ENCODE measurements at regions of chr2 and their contacts with region 1.

Region 1: GRCh38 chr2:183078465-183079138 is at the start of gene DUSP19:
- DNase-seq: peak; percentile 87
- ATAC-seq: peak; percentile 86
- H3K4me3 ChIP-seq: peak within 1 kb of the TSS; percentile 60 to 98 (median 89)
- H3K4me3 Mint-ChIP-seq: peak within 1 kb of the TSS; percentile 99
- H3K27ac ChIP-seq: peak within 1 kb of the TSS in 1 of 2 donors; percentile 41
- H3K27ac Mint-ChIP-seq: peak within 1 kb of the TSS; percentile 83
- H3K4me1 ChIP-seq: peaks cover 3 to 6% of the 10 kb centered on the region in 2 donors
- H3K4me1 Mint-ChIP-seq: peaks cover 11% of the 10 kb centered on the region
- H3K27me3 ChIP-seq: peaks cover 0 to 9% (median 3%) of the 10 kb centered on the region in 4 experiments
- H3K27me3 Mint-ChIP-seq: no peaks in the 10 kb centered on the region
- CTCF ChIP-seq: no peak
- total RNA-seq, gene DUSP19: 1.7 and 2.0 TPM in 2 replicates

Region 2: GRCh38 chr2:183038341-183039300 is 40.0 kb before region 1 on chr2 and contains the start of gene NCKAP1:
- CTCF ChIA-PET with region 1: no interaction called
- POLR2A ChIA-PET with region 1: no interaction called
- intact Hi-C with region 1: loop called (anchors 2 kb)
- DNase-seq: peak; percentile 65
- ATAC-seq: peak; percentile 70
- H3K4me3 ChIP-seq: peak within 1 kb of the TSS in 3 of 5 experiments; percentile 32 to 43 (median 35)
- H3K4me3 Mint-ChIP-seq: peak within 1 kb of the TSS; percentile 74
- H3K27ac ChIP-seq: no peak within 1 kb of the TSS
- H3K27ac Mint-ChIP-seq: peak within 1 kb of the TSS; percentile 41
- H3K4me1 ChIP-seq: peaks cover 22 to 41% of the 10 kb centered on the region in 2 donors
- H3K4me1 Mint-ChIP-seq: peaks cover 27% of the 10 kb centered on the region
- H3K27me3 ChIP-seq: peaks cover 6 to 58% (median 51%) of the 10 kb centered on the region in 4 experiments
- H3K27me3 Mint-ChIP-seq: peaks cover 50% of the 10 kb centered on the region
- CTCF ChIP-seq: peak; percentile 70
- total RNA-seq, gene NCKAP1: 0.05 TPM in 1 of 2 replicates, not detected in the other

Region 3: DNA sequence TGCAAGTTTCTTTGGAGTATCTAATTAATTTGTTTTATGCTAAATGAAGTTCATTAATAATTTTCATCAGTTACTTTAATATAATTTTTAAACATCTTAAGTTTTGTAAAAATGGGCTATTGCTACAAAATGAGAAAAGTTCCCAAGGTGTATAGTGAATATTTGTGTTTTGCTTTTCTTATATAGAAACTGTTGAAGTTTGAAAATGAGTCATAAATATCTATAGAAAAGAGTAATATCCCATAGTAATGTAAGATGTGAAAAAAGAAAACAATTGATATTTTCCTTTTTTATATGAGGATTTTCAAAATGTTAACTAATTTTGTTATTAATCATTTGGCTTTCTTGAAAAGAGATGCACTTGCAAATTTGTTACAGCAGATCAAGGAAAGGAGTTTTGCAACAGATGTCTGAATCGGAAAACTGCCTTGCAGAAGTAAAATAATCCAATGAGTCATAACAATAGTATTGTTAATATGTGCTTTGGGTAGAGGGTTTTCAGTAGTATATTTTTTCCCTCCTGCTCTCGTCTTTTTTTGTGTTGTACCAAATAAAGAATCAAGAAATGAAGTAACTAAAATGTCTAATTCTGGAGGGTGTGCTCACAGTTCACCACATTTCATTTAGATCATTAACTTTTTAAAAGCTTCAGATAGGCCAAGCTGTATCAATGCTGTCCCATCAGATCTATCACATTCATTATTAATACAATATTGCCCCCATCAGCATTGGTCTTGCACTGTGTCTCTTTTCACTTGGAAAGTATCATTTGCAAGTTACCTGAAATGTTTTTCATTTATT is 15.5 kb after region 1 on chr2:
- CTCF ChIA-PET with region 1: no interaction called
- POLR2A ChIA-PET with region 1: no interaction called
- intact Hi-C with region 1: no loop called
- DNase-seq: no peak
- ATAC-seq: no peak
- H3K4me3 ChIP-seq: no peak overlapping the region
- H3K4me3 Mint-ChIP-seq: no peak overlapping the region
- H3K27ac ChIP-seq: no peak overlapping the region
- H3K27ac Mint-ChIP-seq: no peak overlapping the region
- H3K4me1 ChIP-seq: no peaks in the 10 kb centered on the region
- H3K4me1 Mint-ChIP-seq: peaks cover 4% of the 10 kb centered on the region
- H3K27me3 ChIP-seq: no peaks in the 10 kb centered on the region
- H3K27me3 Mint-ChIP-seq: no peaks in the 10 kb centered on the region
- CTCF ChIP-seq: no peak

Region 4: DNA sequence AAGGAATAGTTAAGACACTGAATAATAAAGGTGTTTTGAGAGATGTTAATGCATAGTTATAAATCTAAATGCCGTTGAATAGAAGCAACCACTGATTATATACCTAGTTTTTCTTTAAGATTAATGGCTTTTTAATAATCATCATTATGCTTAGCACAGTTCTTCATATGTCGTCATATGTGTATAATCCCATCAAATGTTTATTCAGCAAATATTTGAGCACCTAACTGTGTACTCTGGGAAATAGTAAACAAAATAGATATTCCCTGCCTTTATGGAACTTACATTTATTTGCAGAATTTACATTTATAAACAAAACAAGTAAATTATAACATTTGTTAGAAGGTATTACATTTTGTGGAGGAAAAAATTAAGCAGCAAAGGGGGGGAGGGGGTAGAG is 55.4 kb after region 1 on chr2:
- CTCF ChIA-PET with region 1: no interaction called
- POLR2A ChIA-PET with region 1: no interaction called
- intact Hi-C with region 1: no loop called
- DNase-seq: no peak
- ATAC-seq: no peak
- H3K4me3 ChIP-seq: no peak overlapping the region
- H3K4me3 Mint-ChIP-seq: no peak overlapping the region
- H3K27ac ChIP-seq: no peak overlapping the region
- H3K27ac Mint-ChIP-seq: no peak overlapping the region
- H3K4me1 ChIP-seq: no peaks in the 10 kb centered on the region
- H3K4me1 Mint-ChIP-seq: peaks cover 1% of the 10 kb centered on the region
- H3K27me3 ChIP-seq: no peaks in the 10 kb centered on the region
- H3K27me3 Mint-ChIP-seq: no peaks in the 10 kb centered on the region
- CTCF ChIP-seq: no peak